Caco-2 (cell line): ENCODE measurements at regions of chr18 and their contacts with region 1.

Region 1: DNA sequence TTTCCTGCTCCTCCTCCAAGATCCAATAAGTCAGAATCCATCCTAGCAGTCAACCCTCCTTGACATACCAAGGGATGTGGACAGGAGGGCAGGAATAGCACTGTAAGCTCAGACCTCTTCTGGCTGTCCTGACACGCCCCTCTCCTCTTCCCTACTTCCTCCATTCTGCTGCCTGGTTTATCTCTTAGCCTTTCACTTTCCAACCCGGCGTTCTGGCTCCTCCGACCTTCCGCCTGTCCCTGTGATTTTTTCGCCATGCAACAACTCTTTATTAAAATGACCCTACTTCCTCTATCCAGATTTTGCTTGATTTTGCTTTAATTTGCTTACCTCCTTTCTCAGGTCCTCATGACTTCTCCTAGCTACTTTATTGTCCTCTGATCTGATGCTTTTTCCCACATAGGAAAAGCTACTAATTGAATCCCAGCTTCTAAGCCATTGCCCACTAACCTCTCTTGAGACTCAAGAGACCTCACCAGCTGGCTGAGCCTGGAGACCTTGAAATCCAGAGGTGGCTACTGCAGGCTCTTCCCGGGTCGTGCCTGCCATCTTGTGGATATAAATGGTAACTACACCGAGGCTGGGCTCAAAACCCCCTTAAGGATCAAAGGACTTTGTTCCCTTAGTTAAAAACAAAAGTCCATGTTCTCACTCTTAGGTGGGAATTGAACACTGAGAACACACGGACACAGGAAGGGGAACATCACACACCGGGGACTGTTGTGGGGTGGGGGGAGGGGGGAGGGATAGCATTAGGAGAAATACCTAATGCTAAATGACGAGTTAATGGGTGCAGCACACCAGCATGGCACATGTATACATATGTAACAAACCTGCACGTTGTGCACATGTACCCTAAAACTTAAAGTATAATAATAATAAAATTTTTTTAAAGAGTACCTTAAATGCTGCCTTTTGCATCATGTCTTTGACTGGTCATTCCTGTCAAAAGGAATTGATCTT is 139.4 kb downstream of the AKAIN1 start:
- DNase-seq: peak; percentile 61 to 68
- H3K4me3 ChIP-seq: no peak overlapping the region
- H3K4me3 Mint-ChIP-seq: no peak overlapping the region
- H3K27ac Mint-ChIP-seq: no peak overlapping the region
- H3K4me1 ChIP-seq: no peaks in the 10 kb centered on the region
- H3K4me1 Mint-ChIP-seq: no peaks in the 10 kb centered on the region
- H3K27me3 ChIP-seq: no peaks in the 10 kb centered on the region
- H3K27me3 Mint-ChIP-seq: peaks cover 8% of the 10 kb centered on the region
- CTCF ChIP-seq: peak; percentile 73 to 80

Region 2: GRCh38 chr18:4106407-4107033 is 951.1 kb before region 1 on chr18:
- CTCF ChIA-PET with region 1: interaction called, 8 read pairs
- POLR2A ChIA-PET with region 1: no interaction called
- intact Hi-C with region 1: loop called (anchors 1 kb)
- DNase-seq: peak; percentile 60 to 69
- H3K4me3 ChIP-seq: no peak overlapping the region
- H3K4me3 Mint-ChIP-seq: no peak overlapping the region
- H3K27ac Mint-ChIP-seq: no peak overlapping the region
- H3K4me1 ChIP-seq: no peaks in the 10 kb centered on the region
- H3K4me1 Mint-ChIP-seq: no peaks in the 10 kb centered on the region
- H3K27me3 ChIP-seq: no peaks in the 10 kb centered on the region
- H3K27me3 Mint-ChIP-seq: peaks cover 16% of the 10 kb centered on the region
- CTCF ChIP-seq: peak; percentile 86

Region 3: GRCh38 chr18:4181882-4182568 is 875.6 kb before region 1 on chr18:
- CTCF ChIA-PET with region 1: interaction called, 6 read pairs
- POLR2A ChIA-PET with region 1: no interaction called
- intact Hi-C with region 1: loop called (anchors 1 kb)
- DNase-seq: peak in 1 of 2 experiments; percentile 13
- H3K4me3 ChIP-seq: no peak overlapping the region
- H3K4me3 Mint-ChIP-seq: no peak overlapping the region
- H3K27ac Mint-ChIP-seq: no peak overlapping the region
- H3K4me1 ChIP-seq: no peaks in the 10 kb centered on the region
- H3K4me1 Mint-ChIP-seq: no peaks in the 10 kb centered on the region
- H3K27me3 ChIP-seq: no peaks in the 10 kb centered on the region
- H3K27me3 Mint-ChIP-seq: peaks cover 3% of the 10 kb centered on the region
- CTCF ChIP-seq: peak in 1 of 2 experiments; percentile 54

Region 4: DNA sequence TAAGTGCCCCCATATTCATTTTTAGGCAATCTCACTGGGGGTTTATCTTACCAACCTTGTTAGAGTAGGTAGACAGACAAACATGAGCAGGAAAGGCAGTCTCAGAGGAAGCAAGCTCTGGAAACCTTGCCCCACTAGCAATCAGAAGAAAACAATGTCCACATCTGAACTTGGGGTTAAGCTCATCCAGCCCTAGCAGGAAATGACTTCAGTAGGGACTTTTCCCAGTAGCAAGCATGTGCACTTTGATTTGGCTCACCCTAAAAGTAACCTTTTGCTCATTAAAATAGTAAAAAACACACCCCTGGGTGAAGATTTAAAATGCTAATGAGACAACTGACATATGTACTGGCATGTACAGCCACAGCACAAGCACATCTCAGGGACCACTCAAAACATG is 36.1 kb before region 1 on chr18:
- CTCF ChIA-PET with region 1: interaction called, 4 read pairs
- POLR2A ChIA-PET with region 1: no interaction called
- intact Hi-C with region 1: loop called (anchors 2 kb)
- DNase-seq: no peak
- H3K4me3 ChIP-seq: no peak overlapping the region
- H3K4me3 Mint-ChIP-seq: no peak overlapping the region
- H3K27ac Mint-ChIP-seq: no peak overlapping the region
- H3K4me1 ChIP-seq: no peaks in the 10 kb centered on the region
- H3K4me1 Mint-ChIP-seq: no peaks in the 10 kb centered on the region
- H3K27me3 ChIP-seq: no peaks in the 10 kb centered on the region
- H3K27me3 Mint-ChIP-seq: peaks cover 3% of the 10 kb centered on the region
- CTCF ChIP-seq: no peak

Region 5: DNA sequence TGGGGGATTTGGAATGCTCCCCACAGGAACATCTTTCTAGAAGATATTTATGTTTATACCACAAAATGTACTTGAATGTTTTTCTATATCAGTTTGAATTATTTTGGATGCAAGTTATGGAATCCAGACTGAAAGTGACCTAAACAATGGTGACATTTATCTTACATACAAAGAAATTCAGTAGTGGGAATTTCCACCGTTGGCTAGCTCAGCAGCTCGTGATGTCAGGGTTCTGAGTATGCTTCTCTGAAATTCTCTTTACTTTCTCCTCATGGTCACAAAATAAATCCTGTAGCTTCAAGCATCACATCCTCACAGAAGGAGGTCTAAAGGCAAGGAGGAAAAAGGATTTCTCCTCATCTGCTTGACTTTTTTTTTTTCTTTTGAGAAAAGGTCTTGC is 34.1 kb after region 1 on chr18:
- CTCF ChIA-PET with region 1: no interaction called
- POLR2A ChIA-PET with region 1: no interaction called
- intact Hi-C with region 1: no loop called
- DNase-seq: no peak
- H3K4me3 ChIP-seq: no peak overlapping the region
- H3K4me3 Mint-ChIP-seq: no peak overlapping the region
- H3K27ac Mint-ChIP-seq: no peak overlapping the region
- H3K4me1 ChIP-seq: no peaks in the 10 kb centered on the region
- H3K4me1 Mint-ChIP-seq: no peaks in the 10 kb centered on the region
- H3K27me3 ChIP-seq: no peaks in the 10 kb centered on the region
- H3K27me3 Mint-ChIP-seq: peaks cover 3% of the 10 kb centered on the region
- CTCF ChIP-seq: no peak

Region 6: DNA sequence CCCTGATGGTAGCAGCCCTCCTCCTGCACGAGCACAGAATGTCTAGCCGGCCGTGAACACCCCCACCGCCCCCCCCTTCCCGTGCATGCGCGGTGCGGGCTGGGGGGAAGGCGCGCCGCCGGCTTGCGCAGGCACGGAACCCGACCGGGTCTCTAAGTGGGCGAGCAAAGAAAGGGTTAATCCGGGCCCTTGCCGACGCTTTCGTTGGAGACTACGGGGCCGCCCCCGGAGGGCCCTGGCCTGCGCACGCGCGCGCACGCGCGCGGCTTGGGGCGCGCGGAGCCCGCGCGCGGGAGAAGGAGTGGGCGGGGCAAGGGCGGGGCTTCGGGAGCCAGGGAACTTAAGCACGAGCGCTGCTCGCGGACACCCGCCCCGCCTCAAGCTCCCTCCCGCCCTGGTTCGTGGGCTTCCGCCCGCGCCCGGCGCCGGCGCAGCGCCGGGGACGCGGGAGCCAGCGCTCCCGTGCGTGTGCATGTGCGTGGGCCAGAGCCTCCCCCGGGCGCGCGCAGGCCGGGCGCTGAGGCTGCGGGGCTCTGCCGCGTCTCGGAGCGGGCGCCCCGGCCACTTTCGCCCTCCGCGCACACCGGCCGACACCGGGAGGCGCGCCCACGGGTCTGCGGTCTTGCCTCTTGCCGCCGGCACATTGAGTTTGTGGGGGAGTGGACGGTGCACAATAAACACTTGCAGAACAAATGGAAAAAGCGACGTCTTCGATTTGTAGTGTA is 238.5 kb after region 1 on chr18:
- CTCF ChIA-PET with region 1: no interaction called
- POLR2A ChIA-PET with region 1: no interaction called
- intact Hi-C with region 1: no loop called
- DNase-seq: peak; percentile 94 to 95
- H3K4me3 ChIP-seq: peak overlapping the region; percentile 89
- H3K4me3 Mint-ChIP-seq: peak overlapping the region; percentile 75
- H3K27ac Mint-ChIP-seq: peak overlapping the region; percentile 72
- H3K4me1 ChIP-seq: 0 out of 2 replicates have a peak, but pooled peaks cover 4% of the 10 kb centered on the region
- H3K4me1 Mint-ChIP-seq: peaks cover 9% of the 10 kb centered on the region
- H3K27me3 ChIP-seq: no peaks in the 10 kb centered on the region
- H3K27me3 Mint-ChIP-seq: no peaks in the 10 kb centered on the region
- CTCF ChIP-seq: no peak